Natural killer cell (primary cell): ENCODE measurements at regions of chr4 and their contacts with region 1.

Region 1: DNA sequence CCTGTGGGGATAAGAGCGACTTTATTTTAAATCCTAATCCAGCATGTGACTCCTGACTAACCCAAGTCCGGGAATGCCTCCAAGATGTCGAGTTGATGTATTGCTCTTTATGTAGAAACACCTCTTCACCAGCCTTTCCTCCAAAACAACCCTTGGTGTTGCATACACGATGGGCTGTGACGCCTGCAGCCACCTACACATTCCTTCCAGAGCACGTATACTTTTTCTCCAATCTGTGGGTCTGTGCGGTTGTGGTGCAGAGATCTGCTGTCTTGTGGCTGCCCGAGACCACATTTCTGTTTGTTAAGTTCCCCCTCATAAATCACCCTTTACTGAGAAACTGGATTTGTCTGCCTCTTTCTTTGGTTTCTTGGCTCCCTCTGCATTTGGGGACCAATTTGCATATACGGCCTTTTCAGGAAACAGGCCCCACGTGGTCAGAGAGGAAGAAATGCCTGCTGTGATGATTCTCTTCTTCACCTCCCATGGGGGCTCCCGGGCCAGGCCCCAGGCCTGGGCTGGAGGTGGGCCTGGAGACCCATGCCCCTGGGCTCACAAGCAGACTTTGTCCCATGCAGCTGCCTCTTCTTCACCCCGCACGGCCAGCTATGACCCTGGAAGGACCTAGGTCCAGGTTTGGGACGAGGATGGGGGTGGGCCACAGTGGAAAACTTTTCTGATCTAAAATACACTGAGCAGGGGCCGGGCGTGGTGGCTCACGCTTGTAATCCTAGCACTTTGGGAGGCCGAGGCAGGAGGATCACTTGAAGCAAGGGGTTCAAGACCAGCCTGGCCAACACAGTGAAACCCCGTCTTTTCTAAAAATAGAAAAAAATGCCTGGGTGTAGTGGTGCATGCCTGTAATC is 21.4 kb upstream of the AFAP1 start:
- DNase-seq: peak in 1 of 2 donors; percentile 63
- ATAC-seq: peak in 1 of 3 donors; percentile 25
- H3K4me3 ChIP-seq: no peak overlapping the region
- H3K4me3 Mint-ChIP-seq: peak overlapping the region; percentile 66
- H3K27ac ChIP-seq: no peak overlapping the region
- H3K27ac Mint-ChIP-seq: peak overlapping the region in 1 of 2 donors; percentile 75
- H3K4me1 ChIP-seq: peaks cover 36% of the 10 kb centered on the region
- H3K4me1 Mint-ChIP-seq: peaks cover 28 to 45% of the 10 kb centered on the region in 2 donors
- H3K27me3 ChIP-seq: no peaks in the 10 kb centered on the region
- H3K27me3 Mint-ChIP-seq: peaks cover 6 to 19% of the 10 kb centered on the region in 2 donors
- CTCF ChIP-seq: no peak

Region 2: DNA sequence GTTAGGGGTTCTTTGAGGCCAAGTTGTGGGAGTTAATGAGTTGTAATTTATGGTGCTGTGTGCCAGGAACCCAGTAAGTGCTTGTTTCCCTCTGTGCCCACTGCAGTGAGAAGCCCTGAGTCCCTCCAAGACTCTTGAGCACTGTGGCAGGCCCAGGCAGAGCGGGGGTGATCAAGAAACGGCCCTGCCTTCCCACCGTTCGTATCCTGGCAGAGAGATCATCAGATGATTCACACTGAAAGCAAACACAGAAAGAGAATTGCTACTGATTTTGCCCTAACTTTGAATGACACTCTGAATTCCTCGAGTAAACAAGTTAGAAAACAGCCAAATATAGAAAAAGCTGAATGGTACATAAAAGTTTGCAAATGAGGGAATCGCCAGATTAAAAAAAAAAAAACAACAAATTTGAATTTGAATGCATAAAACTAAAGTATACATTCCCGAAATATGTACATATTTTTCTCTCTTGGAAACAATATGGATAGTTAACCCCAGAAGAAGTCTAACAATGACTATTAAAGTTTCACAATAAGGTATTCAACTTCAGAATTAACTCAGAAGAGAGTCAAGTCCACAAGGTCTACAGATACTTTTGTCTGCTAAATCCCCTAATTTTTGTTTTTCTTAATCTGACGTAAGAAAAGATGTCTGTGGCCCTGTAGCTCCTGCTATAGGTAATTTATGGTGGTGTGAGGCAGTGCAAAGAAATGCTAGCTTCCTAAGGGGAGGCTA is 93.2 kb before region 1 on chr4:
- intact Hi-C with region 1: loop called (anchors 5 kb)
- DNase-seq: no peak
- ATAC-seq: no peak
- H3K4me3 ChIP-seq: no peak overlapping the region
- H3K4me3 Mint-ChIP-seq: no peak overlapping the region
- H3K27ac ChIP-seq: no peak overlapping the region
- H3K27ac Mint-ChIP-seq: peak overlapping the region in 1 of 2 donors; percentile 6
- H3K4me1 ChIP-seq: no peaks in the 10 kb centered on the region
- H3K4me1 Mint-ChIP-seq: peaks cover 14% of the 10 kb centered on the region in 2 donors
- H3K27me3 ChIP-seq: no peaks in the 10 kb centered on the region
- H3K27me3 Mint-ChIP-seq: no peaks in the 10 kb centered on the region
- CTCF ChIP-seq: no peak